WTC11 (cell line): ENCODE measurements at regions of chr2 and their contacts with region 1.

Region 1: DNA sequence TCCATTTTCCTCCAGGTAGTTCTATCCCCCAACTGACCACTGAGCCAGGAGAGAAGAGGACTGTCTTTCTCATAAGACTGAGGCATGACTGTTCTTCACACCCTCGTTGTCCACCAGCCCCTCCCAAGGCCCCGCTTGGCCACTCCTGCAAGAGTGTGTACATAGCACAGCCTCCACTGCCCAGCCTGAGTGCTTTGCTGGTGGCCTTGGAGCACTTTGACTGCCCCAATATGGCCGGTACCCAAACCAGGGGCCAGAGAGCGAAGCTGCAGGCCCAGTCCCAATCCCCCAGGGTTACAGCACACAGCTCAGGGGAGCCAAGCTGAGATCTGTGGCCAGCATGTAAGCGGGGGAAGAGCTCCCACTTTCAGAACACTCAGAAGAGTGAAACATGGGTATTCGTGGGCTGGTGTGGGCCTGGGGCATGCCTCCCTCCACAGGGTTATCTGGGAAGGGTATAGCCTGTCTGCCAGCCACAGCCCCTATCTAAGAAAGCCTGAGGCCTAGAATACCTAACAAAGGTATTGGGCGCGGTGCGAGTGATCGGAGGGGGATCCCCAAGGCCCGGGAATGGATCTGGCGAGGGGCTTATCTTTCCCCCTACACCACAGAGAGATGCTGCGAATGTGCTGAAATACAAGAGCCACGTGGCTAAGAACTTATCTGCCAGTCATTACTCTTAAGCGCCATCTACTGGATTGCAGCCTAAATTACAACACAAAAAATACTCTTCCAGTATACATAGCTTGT is 163.8 kb downstream of the WDPCP start:
- DNase-seq: peak; percentile 25
- ATAC-seq: peak; percentile 94
- H3K4me3 Mint-ChIP-seq: no peak overlapping the region
- H3K27ac Mint-ChIP-seq: no peak overlapping the region
- H3K4me1 Mint-ChIP-seq: no peaks in the 10 kb centered on the region
- H3K27me3 Mint-ChIP-seq: peaks cover 4% of the 10 kb centered on the region
- CTCF ChIP-seq: peak; percentile 76

Region 2: GRCh38 chr2:63308749-63309148 is 115.8 kb before region 1 on chr2:
- CTCF ChIA-PET with region 1: no interaction called
- POLR2A ChIA-PET with region 1: no interaction called
- DNase-seq: no peak
- ATAC-seq: no peak
- H3K4me3 Mint-ChIP-seq: no peak overlapping the region
- H3K27ac Mint-ChIP-seq: no peak overlapping the region
- H3K4me1 Mint-ChIP-seq: no peaks in the 10 kb centered on the region
- H3K27me3 Mint-ChIP-seq: no peaks in the 10 kb centered on the region
- CTCF ChIP-seq: no peak

Region 3: DNA sequence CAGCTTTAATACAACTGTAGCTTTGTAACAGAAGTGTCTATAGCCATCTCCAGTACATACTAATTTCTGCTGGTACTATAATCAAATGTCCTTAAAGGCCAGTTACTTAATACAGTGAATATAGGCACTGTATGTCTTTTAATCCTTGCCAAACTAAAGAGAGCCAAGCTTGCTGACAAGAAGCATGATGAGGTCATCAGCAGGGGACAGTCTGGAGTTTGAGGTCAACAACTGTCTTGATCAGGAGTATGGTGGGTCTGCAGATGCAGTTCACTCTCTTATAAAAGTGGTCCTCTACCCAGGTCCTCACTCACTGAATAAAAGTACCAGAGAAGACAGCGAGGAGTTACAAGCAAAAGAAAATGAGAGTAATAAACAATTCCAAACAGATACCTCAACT is 55.4 kb before region 1 on chr2:
- CTCF ChIA-PET with region 1: no interaction called
- POLR2A ChIA-PET with region 1: no interaction called
- DNase-seq: no peak
- ATAC-seq: no peak
- H3K4me3 Mint-ChIP-seq: no peak overlapping the region
- H3K27ac Mint-ChIP-seq: no peak overlapping the region
- H3K4me1 Mint-ChIP-seq: no peaks in the 10 kb centered on the region
- H3K27me3 Mint-ChIP-seq: no peaks in the 10 kb centered on the region
- CTCF ChIP-seq: no peak

Region 4: DNA sequence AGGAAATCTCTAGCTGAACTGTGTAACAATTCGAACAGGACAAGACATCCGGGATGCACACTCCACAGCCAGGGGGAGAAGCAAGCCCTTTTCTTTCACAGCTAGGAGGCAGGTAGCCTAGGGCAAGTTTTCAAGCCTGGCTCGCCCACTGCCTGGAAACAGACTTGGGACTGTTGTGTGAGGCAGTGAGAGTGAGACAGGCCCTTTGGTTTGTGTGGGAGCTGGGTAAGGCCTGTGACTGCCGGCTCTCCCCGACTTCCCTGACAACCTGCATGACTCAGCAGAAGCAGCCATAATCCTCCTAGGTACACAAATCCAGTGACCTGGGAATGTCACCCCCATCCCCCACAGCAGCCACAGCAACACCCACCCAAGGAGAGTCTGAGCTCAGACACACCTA is 16.0 kb before region 1 on chr2:
- CTCF ChIA-PET with region 1: interaction called, 10 read pairs
- POLR2A ChIA-PET with region 1: no interaction called
- DNase-seq: no peak
- ATAC-seq: no peak
- H3K4me3 Mint-ChIP-seq: no peak overlapping the region
- H3K27ac Mint-ChIP-seq: no peak overlapping the region
- H3K4me1 Mint-ChIP-seq: peaks cover 8% of the 10 kb centered on the region
- H3K27me3 Mint-ChIP-seq: no peaks in the 10 kb centered on the region
- CTCF ChIP-seq: no peak

Region 5: DNA sequence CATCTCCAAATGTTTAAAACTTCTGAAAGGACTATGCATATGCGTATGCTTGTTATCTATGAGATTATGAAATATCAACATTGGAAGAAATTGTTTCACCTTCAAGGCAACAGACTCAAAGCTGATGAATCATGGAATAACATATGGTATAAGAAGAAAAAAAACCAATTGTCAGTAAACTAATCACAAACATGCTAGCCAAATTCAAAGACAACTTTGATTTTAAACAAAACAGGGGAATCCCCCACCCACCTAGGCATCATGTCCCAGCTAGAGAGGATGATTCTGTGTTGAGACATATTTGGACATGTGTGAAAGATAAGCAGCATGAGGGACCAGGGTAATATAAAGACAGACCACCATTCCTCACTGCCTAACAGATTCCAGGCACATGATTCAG is 16.1 kb after region 1 on chr2:
- CTCF ChIA-PET with region 1: interaction called, 15 read pairs
- POLR2A ChIA-PET with region 1: no interaction called
- DNase-seq: no peak
- ATAC-seq: no peak
- H3K4me3 Mint-ChIP-seq: no peak overlapping the region
- H3K27ac Mint-ChIP-seq: 0 out of 2 replicates have a peak overlapping the region, but pooled peaks have one; percentile 20
- H3K4me1 Mint-ChIP-seq: peaks cover 18% of the 10 kb centered on the region
- H3K27me3 Mint-ChIP-seq: no peaks in the 10 kb centered on the region
- CTCF ChIP-seq: no peak

Region 6: GRCh38 chr2:63465633-63466032 is 41.1 kb after region 1 on chr2:
- CTCF ChIA-PET with region 1: no interaction called
- POLR2A ChIA-PET with region 1: no interaction called
- DNase-seq: no peak
- ATAC-seq: no peak
- H3K4me3 Mint-ChIP-seq: no peak overlapping the region
- H3K27ac Mint-ChIP-seq: no peak overlapping the region
- H3K4me1 Mint-ChIP-seq: peaks cover 4% of the 10 kb centered on the region; the same call in 1 of the 2 replicates
- H3K27me3 Mint-ChIP-seq: no peaks in the 10 kb centered on the region
- CTCF ChIP-seq: no peak